MCF 10A (cell line): ENCODE measurements at regions of chr2 and their contacts with region 1.

Region 1: GRCh38 chr2:170409164-170409535 is 231.2 kb downstream of the MYO3B start:
- DNase-seq: peak; percentile 72
- H3K4me3 Mint-ChIP-seq: peak overlapping the region; percentile 54
- H3K27ac Mint-ChIP-seq: no peak overlapping the region
- H3K4me1 Mint-ChIP-seq: peaks cover 8% of the 10 kb centered on the region
- H3K27me3 Mint-ChIP-seq: peaks cover 22% of the 10 kb centered on the region
- CTCF ChIP-seq: peak; percentile 81

Region 2: DNA sequence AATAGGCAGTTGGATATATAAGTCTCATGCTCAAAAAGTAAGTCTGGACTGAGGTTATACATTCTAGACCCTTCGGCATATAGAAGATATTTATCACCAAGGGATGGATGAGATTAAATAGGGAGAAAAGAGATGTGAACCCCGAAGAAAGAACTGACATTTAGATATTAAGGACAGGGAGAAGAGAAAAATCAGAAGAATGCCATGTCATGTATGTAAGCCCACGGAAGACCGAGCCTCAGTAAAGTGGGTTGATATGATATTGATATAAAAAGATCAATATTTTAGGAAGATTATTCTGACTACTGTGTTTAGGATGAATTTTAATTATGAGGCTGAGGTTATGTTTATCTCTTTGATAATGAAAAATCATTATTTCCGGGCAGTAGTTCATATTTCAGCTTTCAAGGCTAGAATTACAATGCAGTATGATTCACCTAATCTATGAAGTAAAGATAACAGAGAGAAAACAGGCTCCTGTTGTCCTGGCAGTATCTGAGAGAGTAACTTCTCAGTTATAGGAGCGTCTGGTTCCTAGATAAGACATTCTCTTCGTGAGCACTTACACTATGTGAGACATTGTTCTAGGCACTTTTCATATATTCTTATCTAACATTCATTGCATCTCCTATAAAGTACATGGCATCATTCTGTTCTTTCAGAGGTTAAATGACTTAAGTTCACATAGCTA is 498.9 kb before region 1 on chr2:
- CTCF ChIA-PET with region 1: no interaction called
- POLR2A ChIA-PET with region 1: no interaction called
- intact Hi-C with region 1: no loop called
- DNase-seq: no peak
- H3K4me3 Mint-ChIP-seq: no peak overlapping the region
- H3K27ac Mint-ChIP-seq: no peak overlapping the region
- H3K4me1 Mint-ChIP-seq: peaks cover 5% of the 10 kb centered on the region
- H3K27me3 Mint-ChIP-seq: no peaks in the 10 kb centered on the region
- CTCF ChIP-seq: no peak

Region 3: GRCh38 chr2:170276902-170277629 is 132.1 kb before region 1 on chr2:
- CTCF ChIA-PET with region 1: no interaction called
- POLR2A ChIA-PET with region 1: no interaction called
- intact Hi-C with region 1: no loop called
- DNase-seq: no peak
- H3K4me3 Mint-ChIP-seq: no peak overlapping the region
- H3K27ac Mint-ChIP-seq: no peak overlapping the region
- H3K4me1 Mint-ChIP-seq: no peaks in the 10 kb centered on the region
- H3K27me3 Mint-ChIP-seq: peaks cover 53% of the 10 kb centered on the region
- CTCF ChIP-seq: no peak

Region 4: GRCh38 chr2:170396799-170397459 is 12.2 kb before region 1 on chr2:
- CTCF ChIA-PET with region 1: interaction called, 24 read pairs
- POLR2A ChIA-PET with region 1: no interaction called
- intact Hi-C with region 1: no loop called
- DNase-seq: no peak
- H3K4me3 Mint-ChIP-seq: no peak overlapping the region
- H3K27ac Mint-ChIP-seq: no peak overlapping the region
- H3K4me1 Mint-ChIP-seq: no peaks in the 10 kb centered on the region
- H3K27me3 Mint-ChIP-seq: peaks cover 28% of the 10 kb centered on the region
- CTCF ChIP-seq: peak; percentile 44

Region 5: GRCh38 chr2:170505631-170506275 is 96.6 kb after region 1 on chr2:
- CTCF ChIA-PET with region 1: no interaction called
- POLR2A ChIA-PET with region 1: no interaction called
- intact Hi-C with region 1: no loop called
- DNase-seq: no peak
- H3K4me3 Mint-ChIP-seq: no peak overlapping the region
- H3K27ac Mint-ChIP-seq: no peak overlapping the region
- H3K4me1 Mint-ChIP-seq: peaks cover 6% of the 10 kb centered on the region
- H3K27me3 Mint-ChIP-seq: no peaks in the 10 kb centered on the region
- CTCF ChIP-seq: no peak

Region 6: GRCh38 chr2:170530284-170530745 is 121.2 kb after region 1 on chr2:
- CTCF ChIA-PET with region 1: interaction called, 20 read pairs
- POLR2A ChIA-PET with region 1: no interaction called
- intact Hi-C with region 1: no loop called
- DNase-seq: peak; percentile 81
- H3K4me3 Mint-ChIP-seq: no peak overlapping the region
- H3K27ac Mint-ChIP-seq: peak overlapping the region; percentile 29
- H3K4me1 Mint-ChIP-seq: peaks cover 19% of the 10 kb centered on the region
- H3K27me3 Mint-ChIP-seq: no peaks in the 10 kb centered on the region
- CTCF ChIP-seq: no peak

Region 7: DNA sequence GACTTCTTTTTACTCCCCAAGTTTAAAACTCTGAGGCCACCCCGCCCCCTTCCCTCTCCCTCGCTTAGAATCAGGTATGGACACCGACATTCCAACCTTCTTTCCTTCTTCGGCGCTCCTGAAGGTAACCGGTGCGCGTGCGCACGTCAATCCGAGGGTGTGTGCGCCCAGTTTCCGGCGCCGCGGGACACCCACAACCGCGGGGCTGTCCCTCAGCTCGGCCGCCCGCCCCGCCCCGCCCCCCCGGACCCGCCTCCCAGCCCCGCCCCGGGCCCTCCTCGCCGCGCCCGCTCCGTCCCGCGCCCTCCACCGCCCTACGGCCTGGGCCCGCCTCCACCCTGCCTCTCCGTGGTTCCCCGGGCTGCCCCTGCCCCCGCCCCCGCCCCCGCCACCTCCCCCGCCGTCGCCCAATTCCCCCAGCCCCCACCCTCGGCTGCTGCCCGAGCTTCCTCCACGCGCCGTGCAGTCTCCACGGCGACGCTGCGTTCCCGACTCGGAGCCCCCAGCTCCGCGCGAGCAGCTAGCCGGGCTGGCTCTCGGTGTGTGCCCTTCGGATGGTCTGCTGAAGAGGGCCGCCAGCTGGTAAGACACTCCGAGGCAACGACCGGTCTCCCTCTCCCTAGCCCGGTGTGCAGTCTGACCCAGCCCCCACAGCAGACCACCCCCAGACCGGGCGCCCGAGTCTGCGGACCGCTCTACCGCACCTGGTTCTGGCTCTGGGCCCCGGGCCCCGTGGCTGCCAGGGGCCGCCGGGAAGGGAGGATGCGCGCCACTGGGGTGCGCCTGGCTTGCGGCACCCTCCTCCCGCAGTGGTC is 361.7 kb after region 1 on chr2:
- CTCF ChIA-PET with region 1: interaction called, 6 read pairs
- POLR2A ChIA-PET with region 1: interaction called, 3 read pairs
- intact Hi-C with region 1: loop called (anchors 1 kb)
- DNase-seq: peak; percentile 83
- H3K4me3 Mint-ChIP-seq: peak overlapping the region; percentile 92
- H3K27ac Mint-ChIP-seq: peak overlapping the region; percentile 94
- H3K4me1 Mint-ChIP-seq: no peaks in the 10 kb centered on the region
- H3K27me3 Mint-ChIP-seq: no peaks in the 10 kb centered on the region
- CTCF ChIP-seq: no peak